ENCODE measurements at regions of chr15 and their contacts with region 1.

Region 1: GRCh38 chr15:40952901-40953712 is at the start of gene CHAC1:
- DNase-seq: peak; percentile 98
- H3K4me3 ChIP-seq: peak within 1 kb of the TSS; percentile 69
- H3K27ac ChIP-seq: peak within 1 kb of the TSS; percentile 99
- H3K4me1 ChIP-seq: peaks cover 43% of the 10 kb centered on the region
- H3K27me3 ChIP-seq: no peaks in the 10 kb centered on the region
- CTCF ChIP-seq: no peak
- total RNA-seq, gene CHAC1: 11.6 and 26.8 TPM in 2 replicates

Region 2: GRCh38 chr15:39908186-39908585 is 1044.9 kb before region 1 on chr15:
- CTCF ChIA-PET with region 1: no interaction called
- POLR2A ChIA-PET with region 1: no interaction called
- intact Hi-C with region 1: no loop called
- DNase-seq: peak; percentile 26
- H3K4me3 ChIP-seq: no peak overlapping the region
- H3K27ac ChIP-seq: no peak overlapping the region
- H3K4me1 ChIP-seq: no peaks in the 10 kb centered on the region
- H3K27me3 ChIP-seq: no peaks in the 10 kb centered on the region
- CTCF ChIP-seq: no peak

Region 3: DNA sequence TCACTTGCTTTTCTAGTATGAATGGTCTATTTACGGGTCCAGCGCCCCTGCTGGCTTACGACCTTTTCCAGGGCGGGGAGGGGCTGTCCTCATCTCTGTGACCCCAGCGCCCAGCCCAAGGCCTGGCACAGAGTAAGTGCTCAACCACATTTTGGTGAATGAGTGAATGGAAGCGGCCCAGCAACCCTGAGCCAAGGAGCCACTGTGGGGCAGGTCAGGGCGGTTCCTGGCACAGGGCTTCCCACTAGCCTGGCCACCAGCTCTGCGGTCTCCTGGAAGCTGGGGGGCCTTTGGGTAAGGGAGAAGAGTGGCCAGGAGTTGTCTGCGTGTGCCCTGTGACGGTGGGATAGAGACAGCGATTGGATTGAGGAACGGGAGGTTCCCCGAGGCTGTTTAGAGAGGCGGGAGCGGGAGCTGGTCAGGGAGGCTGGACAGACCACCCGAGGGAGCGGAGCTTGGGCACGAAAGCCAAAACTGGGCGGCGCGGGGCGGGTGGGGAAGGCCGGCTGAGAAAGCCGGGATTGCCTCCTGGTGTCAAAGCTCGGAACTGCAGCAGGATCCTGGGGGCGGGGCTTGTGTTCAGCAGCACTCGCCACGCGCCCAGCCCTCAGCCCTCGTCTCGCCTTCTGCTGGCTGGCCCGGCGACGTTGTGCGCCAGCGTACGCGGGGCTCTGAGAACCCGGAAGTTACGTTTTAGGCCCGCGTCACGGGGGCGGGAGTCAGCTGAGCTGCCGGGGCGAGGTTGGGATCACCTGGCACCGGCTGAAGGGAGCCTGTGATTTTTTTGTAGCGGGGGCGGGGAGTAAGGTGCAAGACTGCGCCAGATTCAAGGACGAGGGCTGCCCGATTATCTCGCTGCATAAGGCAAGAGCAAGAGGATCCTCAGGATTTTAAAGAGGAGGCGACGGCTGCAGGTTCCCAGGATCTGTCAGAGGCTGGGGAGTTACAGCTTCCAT is 59.1 kb before region 1 on chr15 and contains the start of gene VPS18:
- CTCF ChIA-PET with region 1: no interaction called
- POLR2A ChIA-PET with region 1: no interaction called
- intact Hi-C with region 1: no loop called
- DNase-seq: peak; percentile 98
- H3K4me3 ChIP-seq: peak within 1 kb of the TSS; percentile 95
- H3K27ac ChIP-seq: peak within 1 kb of the TSS; percentile 79
- H3K4me1 ChIP-seq: peaks cover 6% of the 10 kb centered on the region
- H3K27me3 ChIP-seq: no peaks in the 10 kb centered on the region
- CTCF ChIP-seq: peak; percentile 87
- total RNA-seq, gene VPS18: 21.9 and 23.8 TPM in 2 replicates

Region 4: GRCh38 chr15:40941528-40942336 is 11.4 kb before region 1 on chr15:
- CTCF ChIA-PET with region 1: interaction called, 15 read pairs
- POLR2A ChIA-PET with region 1: no interaction called
- intact Hi-C with region 1: no loop called
- DNase-seq: peak; percentile 81
- H3K4me3 ChIP-seq: peak overlapping the region; percentile 55
- H3K27ac ChIP-seq: peak overlapping the region; percentile 66
- H3K4me1 ChIP-seq: peaks cover 34% of the 10 kb centered on the region
- H3K27me3 ChIP-seq: no peaks in the 10 kb centered on the region
- CTCF ChIP-seq: peak; percentile 39

Region 5: GRCh38 chr15:41104234-41104633 is 151.1 kb after region 1 on chr15:
- CTCF ChIA-PET with region 1: no interaction called
- POLR2A ChIA-PET with region 1: no interaction called
- intact Hi-C with region 1: no loop called
- DNase-seq: peak; percentile 13
- H3K4me3 ChIP-seq: no peak overlapping the region
- H3K27ac ChIP-seq: no peak overlapping the region
- H3K4me1 ChIP-seq: no peaks in the 10 kb centered on the region
- H3K27me3 ChIP-seq: no peaks in the 10 kb centered on the region
- CTCF ChIP-seq: no peak

Region 6: DNA sequence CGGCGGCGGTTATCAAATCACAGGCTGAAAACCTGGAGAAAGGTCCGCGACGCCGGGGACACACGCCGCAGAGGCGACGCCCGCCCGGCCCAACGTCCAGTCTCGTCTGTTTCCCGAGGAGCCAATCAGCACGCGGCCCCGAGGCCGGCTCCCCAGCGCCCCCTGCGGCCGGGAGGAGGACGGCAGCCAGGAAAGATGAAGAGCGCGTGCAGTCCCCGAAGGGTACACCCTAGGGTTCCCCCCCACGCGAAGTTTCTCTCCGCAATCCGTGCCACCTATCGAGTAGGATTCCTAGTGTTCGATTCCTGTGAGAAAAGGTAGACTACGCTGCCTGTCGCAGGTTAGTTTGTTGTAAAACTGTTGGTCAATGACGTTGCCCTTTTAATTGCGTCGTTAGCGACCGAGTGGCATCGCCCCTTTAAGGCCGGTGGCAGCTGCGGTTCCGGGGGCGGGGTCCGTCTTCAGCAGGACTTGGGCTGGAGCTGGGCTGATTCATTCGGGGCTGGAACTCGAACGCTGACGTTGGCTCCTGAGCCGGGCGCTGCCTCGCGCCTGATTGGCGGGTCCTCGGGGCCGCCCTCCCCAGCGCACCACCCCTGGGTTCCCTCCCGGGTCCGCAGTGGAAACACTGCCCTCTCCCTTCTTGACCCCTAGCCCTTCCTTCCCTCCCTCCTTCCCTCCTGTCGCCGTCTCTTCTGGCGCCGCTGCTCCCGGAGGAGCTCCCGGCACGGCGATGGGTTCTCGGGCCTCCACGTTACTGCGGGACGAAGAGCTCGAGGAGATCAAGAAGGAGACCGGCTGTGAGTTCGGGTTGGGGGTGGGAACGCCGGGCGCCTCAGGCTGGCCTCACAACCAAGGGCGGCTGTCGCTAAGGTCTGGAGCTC is 277.8 kb after region 1 on chr15 and contains the starts of genes CHP1 and EXD1:
- CTCF ChIA-PET with region 1: no interaction called
- POLR2A ChIA-PET with region 1: no interaction called
- intact Hi-C with region 1: loop called (anchors 5 kb)
- DNase-seq: peak; percentile 98
- H3K4me3 ChIP-seq: peak within 1 kb of the TSS; percentile 72
- H3K27ac ChIP-seq: peak within 1 kb of the TSS; percentile 89
- H3K4me1 ChIP-seq: no peaks in the 10 kb centered on the region
- H3K27me3 ChIP-seq: no peaks in the 10 kb centered on the region
- CTCF ChIP-seq: peak; percentile 96
- total RNA-seq, gene CHP1: 70.8 and 71.2 TPM in 2 replicates
- total RNA-seq, gene EXD1: not detected in 2 replicates

Measured in A673 (cell line).